ENCODE measurements at regions of chr19 and their contacts with region 1.

Region 1: DNA sequence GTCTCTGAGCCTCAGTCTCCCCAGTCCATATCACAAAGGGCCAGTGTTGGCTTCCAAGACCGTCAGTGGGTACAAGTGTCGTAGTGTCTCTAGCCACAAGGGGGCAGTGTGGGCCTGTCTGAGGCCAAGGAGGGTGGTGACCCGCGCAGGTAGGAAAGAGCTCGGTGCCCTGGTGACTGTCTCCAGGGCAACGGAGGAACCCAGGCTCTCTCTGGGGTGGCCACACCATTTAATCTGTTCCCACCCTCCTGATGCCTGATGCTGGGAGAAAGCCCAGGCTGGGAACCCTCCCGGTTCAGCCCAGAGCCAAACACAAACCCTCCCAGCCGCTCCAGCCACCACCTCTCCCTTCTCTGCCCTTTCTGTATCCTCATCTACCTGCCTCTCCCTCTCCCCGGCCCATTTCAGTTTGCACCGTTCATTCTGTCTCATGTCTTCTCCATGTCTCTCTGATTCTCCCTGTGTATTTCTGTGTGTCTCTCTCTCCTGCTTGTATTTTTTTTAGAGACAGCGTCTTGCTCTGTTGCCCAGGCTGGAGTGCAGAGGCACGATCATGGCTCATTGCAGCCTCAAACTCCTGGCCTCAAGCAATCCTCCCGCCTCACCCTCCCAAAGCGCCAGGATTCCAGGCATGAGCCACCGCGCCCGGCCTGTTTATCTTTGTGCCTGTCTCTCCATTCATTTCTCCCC is 17.5 kb upstream of the MEIS3 start:
- DNase-seq: peak; percentile 69
- H3K4me3 Mint-ChIP-seq: no peak overlapping the region
- H3K27ac Mint-ChIP-seq: no peak overlapping the region
- H3K4me1 Mint-ChIP-seq: peaks cover 19% of the 10 kb centered on the region
- H3K27me3 Mint-ChIP-seq: peaks cover 15% of the 10 kb centered on the region

Region 2: GRCh38 chr19:47377208-47377701 is 59.6 kb before region 1 on chr19:
- intact Hi-C with region 1: no loop called
- DNase-seq: no peak
- H3K4me3 Mint-ChIP-seq: no peak overlapping the region
- H3K27ac Mint-ChIP-seq: no peak overlapping the region
- H3K4me1 Mint-ChIP-seq: peaks cover 6% of the 10 kb centered on the region
- H3K27me3 Mint-ChIP-seq: no peaks in the 10 kb centered on the region

Region 3: DNA sequence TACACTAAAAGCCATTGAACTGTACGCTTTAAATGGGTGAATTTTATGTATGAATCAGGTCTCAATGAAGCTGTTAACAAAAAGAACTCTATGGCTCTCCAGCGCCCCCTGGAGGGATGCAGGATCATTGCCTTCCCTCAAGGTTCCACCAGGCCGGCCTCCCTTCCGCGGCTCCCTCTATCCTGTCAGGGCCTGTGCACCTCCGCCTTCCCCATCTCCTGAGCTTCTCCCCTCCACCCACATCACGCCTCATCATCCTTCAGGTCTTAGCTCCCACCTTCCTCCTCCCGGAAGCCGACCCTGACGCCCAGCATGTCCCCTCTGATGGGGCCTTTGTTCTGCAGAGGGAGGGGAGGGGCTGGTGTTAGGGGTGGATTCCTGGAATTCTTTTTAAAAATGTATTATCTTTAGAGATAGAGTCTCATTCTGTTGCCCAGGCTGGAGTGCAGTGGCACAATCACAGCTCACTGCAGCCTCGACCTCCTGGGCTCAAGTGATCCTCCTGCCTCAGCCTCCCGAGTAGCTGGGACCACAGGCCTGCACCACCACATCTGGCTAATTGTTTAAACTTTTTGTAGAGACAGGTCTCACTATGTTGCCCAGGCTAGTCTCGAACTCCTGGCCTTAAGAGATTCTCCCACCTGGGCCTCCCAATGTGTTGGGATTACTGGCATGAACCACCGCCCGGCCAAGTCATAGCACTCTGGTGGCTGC is 45.2 kb before region 1 on chr19:
- intact Hi-C with region 1: no loop called
- DNase-seq: peak; percentile 70
- H3K4me3 Mint-ChIP-seq: no peak overlapping the region
- H3K27ac Mint-ChIP-seq: no peak overlapping the region
- H3K4me1 Mint-ChIP-seq: no peaks in the 10 kb centered on the region
- H3K27me3 Mint-ChIP-seq: peaks cover 5% of the 10 kb centered on the region

Region 4: DNA sequence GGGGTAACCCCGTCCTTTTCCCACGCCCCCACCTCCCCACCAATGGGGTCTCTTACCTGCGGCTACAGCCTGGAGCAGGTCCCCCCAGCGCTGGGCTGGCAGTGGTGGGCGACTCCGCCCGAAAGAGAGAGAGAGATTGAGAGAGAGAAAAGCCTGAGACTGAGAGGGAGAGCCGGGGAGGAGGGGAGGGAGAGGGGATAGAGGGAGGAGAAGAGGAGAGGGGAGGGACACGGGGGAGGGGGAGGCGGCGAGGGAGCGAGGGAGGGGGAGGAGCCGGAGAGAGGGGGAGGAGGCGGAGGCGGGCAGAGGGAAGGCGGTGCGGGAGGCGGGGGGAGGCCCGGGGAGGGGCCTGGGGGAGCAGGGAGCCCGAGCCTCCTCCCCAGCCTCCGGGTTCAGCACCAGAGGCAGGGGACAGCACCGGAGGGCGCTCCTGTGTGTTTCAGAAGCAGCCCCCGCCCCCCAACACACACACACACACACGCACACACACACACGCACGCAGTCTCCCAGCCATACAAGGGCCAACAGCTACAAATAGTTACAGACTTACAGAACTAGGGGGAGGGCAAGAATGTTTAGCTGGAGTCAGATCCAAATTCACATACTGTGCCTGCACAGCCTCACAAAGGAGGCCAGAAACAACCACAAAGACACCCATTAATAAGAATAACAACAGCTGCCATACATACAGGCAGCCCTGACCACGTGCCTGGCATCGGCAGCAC is 35.0 kb after region 1 on chr19 and contains the start of gene SLC8A2:
- intact Hi-C with region 1: no loop called
- DNase-seq: peak; percentile 63
- H3K4me3 Mint-ChIP-seq: no peak within 1 kb of the TSS
- H3K27ac Mint-ChIP-seq: no peak within 1 kb of the TSS
- H3K4me1 Mint-ChIP-seq: peaks cover 7% of the 10 kb centered on the region
- H3K27me3 Mint-ChIP-seq: peaks cover 33% of the 10 kb centered on the region
- total RNA-seq, gene SLC8A2: not detected in 2 replicates

Region 5: GRCh38 chr19:47483800-47484690 is 47.2 kb after region 1 on chr19 and contains the start of gene KPTN:
- intact Hi-C with region 1: loop called (anchors 5 kb)
- DNase-seq: peak; percentile 87
- H3K4me3 Mint-ChIP-seq: peak within 1 kb of the TSS; percentile 99
- H3K27ac Mint-ChIP-seq: peak within 1 kb of the TSS; percentile 96
- H3K4me1 Mint-ChIP-seq: peaks cover 22% of the 10 kb centered on the region
- H3K27me3 Mint-ChIP-seq: no peaks in the 10 kb centered on the region
- total RNA-seq, gene KPTN: 9.6 and 11.3 TPM in 2 replicates

Region 6: DNA sequence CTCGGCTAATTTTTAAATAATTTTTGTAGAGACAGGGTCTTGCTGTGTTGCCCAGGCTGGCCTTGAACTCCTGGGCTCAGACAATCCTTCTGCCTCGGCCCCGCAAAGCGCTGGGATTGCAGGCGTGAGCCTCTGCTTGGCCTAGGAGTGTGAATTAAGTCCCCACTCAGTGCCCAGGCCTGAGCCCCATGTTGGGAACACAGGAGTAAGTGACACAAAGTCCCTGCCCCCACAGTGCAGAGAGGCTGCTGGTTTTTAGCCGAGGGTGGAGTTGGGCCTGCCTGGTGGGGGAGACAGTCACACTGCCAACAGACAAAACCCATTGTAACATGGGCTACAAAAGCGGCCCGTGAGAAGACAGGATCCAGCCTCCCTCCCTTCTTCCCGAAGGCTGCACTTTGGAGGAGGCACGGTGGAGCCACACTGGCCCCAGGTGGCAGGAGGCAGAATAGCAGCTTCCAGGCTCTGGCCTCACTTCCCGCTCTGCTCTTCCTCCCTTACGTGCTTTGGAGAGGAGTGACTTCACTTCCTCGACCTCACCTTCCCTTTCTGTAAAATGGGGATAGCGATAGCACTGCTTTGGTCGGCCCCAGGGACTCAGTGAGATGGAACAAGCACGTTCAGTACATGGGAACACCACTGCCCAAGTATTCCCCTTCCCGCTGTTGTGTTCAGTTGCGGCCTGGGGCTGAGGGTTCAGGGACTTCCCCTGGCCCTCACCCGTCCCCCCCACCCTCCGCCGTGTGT is 261.2 kb after region 1 on chr19:
- intact Hi-C with region 1: loop called (anchors 1 kb)
- DNase-seq: peak; percentile 39
- H3K4me3 Mint-ChIP-seq: no peak overlapping the region
- H3K27ac Mint-ChIP-seq: no peak overlapping the region
- H3K4me1 Mint-ChIP-seq: no peaks in the 10 kb centered on the region
- H3K27me3 Mint-ChIP-seq: no peaks in the 10 kb centered on the region

Region 7: DNA sequence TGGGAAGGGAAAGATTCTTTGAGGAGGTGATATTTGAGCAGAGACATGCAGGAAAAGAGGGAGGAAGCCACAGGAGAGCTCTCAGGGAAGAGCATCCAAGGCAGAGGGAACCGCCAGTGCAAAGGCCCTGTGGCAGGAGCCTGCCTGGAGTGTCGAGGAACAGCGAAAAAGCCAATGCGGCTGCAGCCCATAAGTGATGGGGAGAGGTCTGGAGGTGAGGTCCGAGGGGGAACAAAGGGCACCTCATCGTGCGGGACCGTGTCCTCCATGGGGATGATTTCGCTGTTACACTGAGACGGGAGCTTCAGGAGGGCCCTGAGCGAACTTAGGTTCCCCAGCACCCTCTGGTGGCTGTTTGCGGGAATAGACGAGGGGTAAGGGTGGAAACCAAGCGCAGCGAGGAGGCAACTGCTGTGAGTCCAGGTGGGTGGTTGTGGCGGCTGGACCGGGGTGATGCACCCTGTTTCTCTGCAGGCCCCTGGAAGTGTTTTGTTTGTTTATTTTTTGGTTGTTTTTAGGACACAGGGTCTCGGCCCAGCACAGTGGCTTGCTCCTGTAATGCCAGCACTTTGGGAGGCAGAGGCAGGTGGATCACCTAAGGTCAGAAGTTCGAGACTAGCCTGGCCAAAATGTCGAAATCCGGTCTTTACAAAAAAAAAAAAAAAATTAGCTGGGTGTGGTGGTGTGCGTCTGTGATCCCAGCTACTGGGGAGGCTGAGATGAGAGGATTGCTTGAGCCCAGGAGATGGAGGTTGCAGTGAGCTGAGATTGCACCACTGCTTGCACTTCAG is 270.5 kb after region 1 on chr19:
- intact Hi-C with region 1: loop called (anchors 1 kb)
- DNase-seq: peak; percentile 64
- H3K4me3 Mint-ChIP-seq: no peak overlapping the region
- H3K27ac Mint-ChIP-seq: no peak overlapping the region
- H3K4me1 Mint-ChIP-seq: no peaks in the 10 kb centered on the region
- H3K27me3 Mint-ChIP-seq: peaks cover 5% of the 10 kb centered on the region

Measured in activated T-helper 2 cell treated with anti-CD3 and anti-CD28 coated beads, Interferon-gamma antibody, Interleukin-2, Interleukin-4, amounts not matched to agents 10 μg/mL and 5 μg/mL and 100 μg/mL, durations not matched to agents 14 hours and 24 hours and 36 hours (primary cell).